ENCODE measurements at regions of chr10 and their contacts with region 1.

Region 1: GRCh38 chr10:3785257-3785850 is 345 bp upstream of the KLF6 start:
- DNase-seq: peak; percentile 96 to 100 (median 98)

Region 2: GRCh38 chr10:3197348-3198003 is 587.9 kb before region 1 on chr10:
- intact Hi-C with region 1: loop called (anchors 10 kb)
- DNase-seq: peak; percentile 66 to 97 (median 83)

Region 3: GRCh38 chr10:3472287-3473051 is 312.9 kb before region 1 on chr10:
- intact Hi-C with region 1: loop called (anchors 10 kb)
- DNase-seq: peak in 7 of 10 donors; percentile 44 to 89 (median 60)

Region 4: DNA sequence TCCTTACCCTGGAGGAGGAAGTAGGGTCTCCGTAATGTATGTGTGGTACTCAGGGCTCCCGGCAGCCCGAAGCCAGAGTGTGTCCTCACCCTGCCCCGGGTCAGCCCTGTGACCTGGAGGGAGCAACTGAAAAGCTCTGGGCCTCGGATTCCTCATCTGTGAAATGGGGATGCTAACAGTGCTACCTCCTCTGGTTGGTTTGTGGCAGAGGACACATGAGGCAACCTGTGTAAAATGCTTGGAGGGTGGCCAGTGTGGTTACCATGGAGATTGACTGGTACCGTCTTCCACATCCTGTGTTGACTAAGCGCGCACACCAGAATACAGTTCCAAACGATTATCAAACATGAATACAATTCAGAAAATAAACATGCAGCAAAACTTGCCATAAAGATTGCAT is 163.5 kb after region 1 on chr10:
- intact Hi-C with region 1: no loop called
- DNase-seq: peak in 1 of 10 donors; percentile 32

Region 5: DNA sequence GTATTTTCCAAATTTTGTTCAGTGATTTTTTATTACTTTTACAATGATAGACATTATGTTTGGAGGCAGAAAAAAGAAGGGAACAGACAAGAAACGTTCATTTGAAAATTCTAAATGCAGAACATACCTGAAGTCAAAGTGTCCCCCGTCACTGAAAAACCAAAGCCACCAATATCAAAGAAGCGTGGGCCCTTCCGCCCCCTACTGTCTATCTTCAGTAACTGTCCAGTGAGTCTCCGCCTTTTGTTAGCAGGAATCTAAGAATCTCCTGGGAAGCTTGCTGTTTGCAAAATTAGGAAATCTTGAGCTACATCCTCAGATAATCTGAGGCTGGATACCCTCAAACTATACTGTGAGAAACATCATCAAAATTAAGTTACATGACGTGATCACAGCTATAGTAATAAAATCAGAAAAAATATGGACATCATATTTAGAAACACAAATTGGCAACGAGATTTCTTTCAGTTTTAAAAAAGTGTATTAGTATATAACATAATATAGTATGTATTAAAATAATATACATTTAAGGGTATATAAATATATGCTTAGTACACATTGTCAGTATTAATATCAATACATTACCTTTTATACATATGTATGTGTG is 871.3 kb after region 1 on chr10:
- intact Hi-C with region 1: loop called (anchors 10 kb)
- DNase-seq: peak in 9 of 10 donors; percentile 28 to 87 (median 57)

Measured in posterior cingulate gyrus (tissue), 11 donors.